Endothelial cell of umbilical vein (primary cell): ENCODE measurements at regions of chr5 and their contacts with region 1.

Region 1: DNA sequence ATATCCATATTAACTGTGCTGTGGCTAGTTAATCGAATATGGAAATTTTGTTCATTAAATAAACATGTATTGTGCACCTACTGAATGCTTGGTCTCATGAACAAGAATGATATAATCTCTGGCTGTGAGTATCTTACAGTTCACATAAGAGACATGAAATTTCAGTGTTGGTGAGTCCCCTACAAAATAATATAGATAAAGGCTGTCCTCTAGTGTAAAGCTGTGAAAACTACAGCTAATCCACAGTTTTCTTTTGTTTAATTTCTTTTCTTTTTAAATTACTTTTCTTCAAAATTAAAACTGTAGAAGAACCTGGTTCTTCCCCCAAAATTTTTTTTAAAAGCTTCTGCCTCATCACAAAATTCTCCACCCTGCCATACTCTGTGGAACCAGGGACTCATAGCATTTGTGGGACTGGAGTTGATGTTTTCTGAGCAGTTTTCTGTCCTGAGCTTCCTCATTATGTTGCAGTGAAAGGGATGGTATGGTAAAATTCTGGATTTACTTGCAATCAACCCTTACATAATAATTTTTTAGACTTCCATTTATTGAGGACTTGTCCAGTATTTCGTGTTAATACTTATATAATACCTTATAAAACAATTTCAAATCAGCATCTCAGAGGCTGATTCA is 135.0 kb downstream of the STK32A start:
- DNase-seq: peak; percentile 47
- H3K4me3 ChIP-seq: no peak overlapping the region
- H3K27ac ChIP-seq: no peak overlapping the region
- H3K4me1 ChIP-seq: peaks cover 8% of the 10 kb centered on the region
- H3K27me3 ChIP-seq: peaks cover 2 to 11% of the 10 kb centered on the region in 2 experiments
- CTCF ChIP-seq: peak; percentile 41 to 42
- POLR2A ChIP-seq: no peak

Region 2: DNA sequence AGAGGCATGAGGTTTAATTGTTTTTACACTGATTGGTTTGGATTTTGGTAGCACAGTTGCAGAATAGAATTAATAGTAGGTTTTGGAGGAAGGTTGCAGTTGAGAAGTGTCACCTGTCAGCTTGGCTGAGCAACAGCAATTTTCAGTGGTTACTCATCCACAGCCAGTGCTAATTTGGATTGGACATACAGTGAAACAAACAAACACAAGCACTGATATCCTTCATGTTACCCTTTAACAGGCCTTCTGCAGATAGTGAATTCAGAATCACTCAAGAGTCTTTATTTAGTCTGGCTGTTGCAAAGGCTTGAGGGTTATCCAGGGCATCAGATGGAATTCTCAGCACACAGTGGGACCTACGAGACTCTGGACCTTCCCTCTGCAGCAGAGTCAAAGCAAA is 1063.0 kb before region 1 on chr5:
- CTCF ChIA-PET with region 1: no interaction called
- POLR2A ChIA-PET with region 1: no interaction called
- dilution Hi-C with region 1: no loop called
- intact Hi-C with region 1: no loop called
- DNase-seq: no peak
- H3K4me3 ChIP-seq: no peak overlapping the region
- H3K27ac ChIP-seq: no peak overlapping the region
- H3K4me1 ChIP-seq: no peaks in the 10 kb centered on the region
- H3K27me3 ChIP-seq: peaks cover 11% of the 10 kb centered on the region in 2 experiments
- CTCF ChIP-seq: no peak
- POLR2A ChIP-seq: no peak

Region 3: GRCh38 chr5:146541958-146542849 is 827.7 kb before region 1 on chr5:
- CTCF ChIA-PET with region 1: interaction called, 17 read pairs
- POLR2A ChIA-PET with region 1: no interaction called
- dilution Hi-C with region 1: no loop called
- intact Hi-C with region 1: loop called (anchors 1 kb)
- DNase-seq: peak; percentile 66
- H3K4me3 ChIP-seq: no peak overlapping the region
- H3K27ac ChIP-seq: no peak overlapping the region
- H3K4me1 ChIP-seq: no peaks in the 10 kb centered on the region
- H3K27me3 ChIP-seq: peaks cover 0 to 2% of the 10 kb centered on the region in 2 experiments
- CTCF ChIP-seq: peak; percentile 72 to 81
- POLR2A ChIP-seq: no peak

Region 4: DNA sequence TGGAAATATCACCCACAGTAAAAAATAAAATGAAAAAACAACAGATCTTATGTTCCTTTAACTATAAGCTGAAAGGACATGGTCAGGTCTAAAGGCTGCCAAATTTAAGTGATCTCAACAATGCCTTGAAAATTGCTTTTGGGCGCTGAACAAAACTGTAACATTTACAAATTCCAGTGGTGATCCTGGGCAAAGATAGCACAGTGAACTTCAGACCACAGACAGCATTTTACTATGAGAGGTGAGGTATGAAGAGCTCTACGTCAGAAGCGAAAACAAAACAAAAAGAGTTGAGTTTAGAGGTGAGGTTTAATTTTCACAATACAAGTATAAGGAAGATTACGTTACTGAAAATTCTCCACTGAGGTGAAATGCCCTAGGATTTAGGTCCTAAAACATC is 300.9 kb before region 1 on chr5:
- CTCF ChIA-PET with region 1: no interaction called
- POLR2A ChIA-PET with region 1: no interaction called
- dilution Hi-C with region 1: no loop called
- intact Hi-C with region 1: no loop called
- DNase-seq: no peak
- H3K4me3 ChIP-seq: no peak overlapping the region
- H3K27ac ChIP-seq: no peak overlapping the region
- H3K4me1 ChIP-seq: no peaks in the 10 kb centered on the region
- H3K27me3 ChIP-seq: no peaks in the 10 kb centered on the region
- CTCF ChIP-seq: no peak
- POLR2A ChIP-seq: no peak

Region 5: GRCh38 chr5:147177125-147177840 is 192.6 kb before region 1 on chr5:
- CTCF ChIA-PET with region 1: interaction called, 10 read pairs
- POLR2A ChIA-PET with region 1: no interaction called
- dilution Hi-C with region 1: no loop called
- intact Hi-C with region 1: no loop called
- DNase-seq: no peak
- H3K4me3 ChIP-seq: no peak overlapping the region
- H3K27ac ChIP-seq: no peak overlapping the region
- H3K4me1 ChIP-seq: no peaks in the 10 kb centered on the region
- H3K27me3 ChIP-seq: peaks cover 0 to 2% of the 10 kb centered on the region in 2 experiments
- CTCF ChIP-seq: no peak
- POLR2A ChIP-seq: no peak

Region 6: GRCh38 chr5:147234825-147235635 is 134.8 kb before region 1 on chr5 and contains the start of gene STK32A:
- CTCF ChIA-PET with region 1: interaction called, 16 read pairs
- POLR2A ChIA-PET with region 1: no interaction called
- dilution Hi-C with region 1: no loop called
- intact Hi-C with region 1: no loop called
- DNase-seq: peak; percentile 25
- H3K4me3 ChIP-seq: peak within 1 kb of the TSS; percentile 19 to 35 (median 34)
- H3K27ac ChIP-seq: no peak within 1 kb of the TSS
- H3K4me1 ChIP-seq: no peaks in the 10 kb centered on the region
- H3K27me3 ChIP-seq: peaks cover 22 to 37% of the 10 kb centered on the region in 2 experiments
- CTCF ChIP-seq: no peak
- POLR2A ChIP-seq: no peak
- total RNA-seq, gene STK32A: not detected in 2 replicates

Region 7: DNA sequence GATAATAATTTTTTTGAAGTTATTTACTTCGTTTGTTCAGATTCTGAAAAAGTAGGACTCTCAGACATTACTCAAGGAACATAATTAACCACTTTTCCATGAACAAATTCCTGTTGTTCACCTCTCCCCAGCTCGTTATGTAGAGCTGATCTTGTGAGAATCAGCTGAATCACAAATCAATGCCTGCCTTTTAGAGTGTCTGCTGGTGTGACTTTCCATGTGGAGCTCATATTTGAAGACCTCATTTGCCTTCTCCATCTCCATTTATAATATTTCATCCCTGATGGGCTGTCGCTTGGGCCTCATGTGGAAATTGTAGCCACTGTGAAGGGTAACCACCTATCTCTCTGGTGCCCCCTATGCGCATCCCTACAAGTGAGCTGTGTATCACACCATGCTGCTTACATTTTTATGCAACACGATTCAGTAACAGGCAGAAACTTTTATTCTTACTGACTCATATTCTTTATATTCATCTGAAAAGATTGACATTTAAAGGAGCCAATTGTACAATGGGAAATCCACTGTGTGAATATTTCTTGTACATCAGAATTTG is 23.8 kb before region 1 on chr5:
- CTCF ChIA-PET with region 1: interaction called, 13 read pairs
- POLR2A ChIA-PET with region 1: no interaction called
- dilution Hi-C with region 1: no loop called
- intact Hi-C with region 1: no loop called
- DNase-seq: no peak
- H3K4me3 ChIP-seq: no peak overlapping the region
- H3K27ac ChIP-seq: no peak overlapping the region
- H3K4me1 ChIP-seq: no peaks in the 10 kb centered on the region
- H3K27me3 ChIP-seq: peaks cover 6 to 7% of the 10 kb centered on the region in 2 experiments
- CTCF ChIP-seq: no peak
- POLR2A ChIP-seq: no peak

Region 8: DNA sequence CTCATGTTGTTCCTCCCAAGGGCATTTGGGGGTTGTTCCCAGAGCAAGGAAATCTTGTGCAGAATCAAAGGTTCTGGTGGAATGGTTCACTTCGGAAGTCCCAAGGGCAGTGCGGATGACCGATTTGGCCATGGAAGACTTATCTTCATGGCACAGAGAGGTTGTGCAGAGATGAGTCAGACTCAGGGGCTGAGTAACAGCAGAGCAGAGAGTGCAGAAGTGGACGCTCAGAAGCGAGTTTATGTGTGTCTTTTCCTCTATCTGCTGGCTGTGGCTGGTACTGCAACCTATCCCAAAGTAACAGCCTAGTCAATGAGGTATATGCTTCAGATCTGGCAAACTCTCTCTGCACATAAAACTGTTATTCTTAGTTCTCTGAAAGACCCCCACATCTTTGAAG is 21.9 kb after region 1 on chr5:
- CTCF ChIA-PET with region 1: interaction called, 42 read pairs
- POLR2A ChIA-PET with region 1: interaction called, 3 read pairs
- dilution Hi-C with region 1: no loop called
- intact Hi-C with region 1: no loop called
- DNase-seq: peak; percentile 80
- H3K4me3 ChIP-seq: no peak overlapping the region
- H3K27ac ChIP-seq: no peak overlapping the region
- H3K4me1 ChIP-seq: peaks cover 12% of the 10 kb centered on the region
- H3K27me3 ChIP-seq: no peaks in the 10 kb centered on the region
- CTCF ChIP-seq: peak; percentile 63 to 73
- POLR2A ChIP-seq: no peak

Region 9: DNA sequence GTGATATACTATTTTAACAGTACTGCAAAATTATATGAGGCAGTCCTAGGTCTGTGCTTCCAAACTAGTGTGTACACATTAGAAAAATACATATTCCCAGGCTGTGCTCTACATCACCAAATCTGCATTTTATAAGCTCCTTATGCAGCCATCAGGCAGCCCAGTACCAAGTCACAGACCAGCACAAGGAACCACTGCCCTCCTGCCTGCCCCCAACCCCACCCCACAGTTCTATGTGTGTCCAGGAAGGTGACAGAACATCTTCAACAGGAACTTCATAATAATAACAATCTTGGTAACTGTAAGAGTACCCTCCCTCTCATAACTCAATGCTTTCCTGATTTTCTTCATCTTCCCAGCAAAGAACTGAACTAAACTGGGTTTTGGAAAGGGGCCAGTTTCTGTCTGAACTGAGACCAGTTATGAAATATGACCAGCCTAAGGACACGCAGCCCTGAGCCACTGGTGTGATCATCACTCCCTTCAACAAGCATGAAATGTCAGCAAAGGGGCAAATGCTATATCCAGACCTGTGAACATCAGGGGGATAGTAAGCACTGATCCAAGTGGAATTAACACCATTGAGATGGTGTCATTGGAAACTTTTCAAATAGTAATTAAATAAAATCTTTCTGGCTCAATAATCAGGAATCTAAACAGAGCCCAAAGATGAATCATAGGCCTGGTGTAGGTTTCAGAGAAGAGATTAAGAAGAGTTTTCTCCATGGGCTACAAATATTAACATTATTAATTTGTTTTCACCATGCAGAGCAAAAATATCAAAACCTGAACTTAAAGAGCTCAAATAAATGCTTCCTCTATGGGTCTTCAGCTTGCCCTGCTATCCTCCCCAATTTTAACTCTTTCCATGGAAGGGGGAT is 57.9 kb after region 1 on chr5:
- CTCF ChIA-PET with region 1: no interaction called
- POLR2A ChIA-PET with region 1: no interaction called
- dilution Hi-C with region 1: no loop called
- intact Hi-C with region 1: no loop called
- DNase-seq: no peak
- H3K4me3 ChIP-seq: no peak overlapping the region
- H3K27ac ChIP-seq: no peak overlapping the region
- H3K4me1 ChIP-seq: no peaks in the 10 kb centered on the region
- H3K27me3 ChIP-seq: no peaks in the 10 kb centered on the region
- CTCF ChIP-seq: no peak
- POLR2A ChIP-seq: no peak